Activated B cell treated with CpG ODN at 0.5 μM for 24 hours (primary cell): ENCODE measurements at regions of chr17 and their contacts with region 1.

Region 1: GRCh38 chr17:44350733-44351226 is 5.7 kb downstream of the GRN start:
- DNase-seq: peak; percentile 71
- ATAC-seq: peak; percentile 42
- H3K4me3 Mint-ChIP-seq: no peak overlapping the region
- H3K27ac Mint-ChIP-seq: peak overlapping the region; percentile 65
- H3K4me1 Mint-ChIP-seq: peaks cover 54% of the 10 kb centered on the region
- H3K27me3 Mint-ChIP-seq: no peaks in the 10 kb centered on the region
- CTCF ChIP-seq: no peak

Region 2: DNA sequence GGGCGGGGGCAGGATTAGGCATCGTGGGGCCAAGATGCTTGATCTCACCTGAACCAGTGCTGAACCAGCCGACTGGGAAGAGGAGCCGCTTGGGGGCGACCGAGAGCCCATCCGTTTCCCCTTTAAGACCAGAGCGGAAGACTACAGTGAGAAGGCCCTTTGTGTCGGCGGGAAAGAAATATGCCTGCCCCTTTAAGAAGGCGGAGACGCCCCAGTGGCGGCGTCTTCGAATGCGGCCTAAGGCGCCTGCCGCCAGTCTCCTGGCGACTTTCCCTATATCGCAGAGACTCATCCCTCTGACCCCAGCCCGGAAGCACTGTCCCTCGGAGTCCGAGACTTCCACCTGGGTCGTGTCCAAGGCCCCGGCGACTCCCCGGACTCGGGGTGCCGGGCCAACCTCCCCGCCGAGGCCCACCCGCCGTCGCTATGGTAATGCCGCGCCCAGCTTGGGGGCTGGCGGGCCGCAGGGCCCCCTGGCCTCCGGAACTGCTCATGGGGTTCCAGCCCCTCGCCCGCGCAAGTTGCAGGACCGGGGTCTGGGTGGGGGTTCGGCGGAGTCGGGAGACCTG is 209.0 kb before region 1 on chr17 and contains the start of gene HROB:
- CTCF ChIA-PET with region 1: interaction called, 3 read pairs
- POLR2A ChIA-PET with region 1: interaction called, 3 read pairs
- intact Hi-C with region 1: loop called (anchors 1 kb)
- DNase-seq: peak; percentile 96
- ATAC-seq: peak; percentile 98
- H3K4me3 Mint-ChIP-seq: peak within 1 kb of the TSS; percentile 84
- H3K27ac Mint-ChIP-seq: peak within 1 kb of the TSS; percentile 70
- H3K4me1 Mint-ChIP-seq: peaks cover 15% of the 10 kb centered on the region
- H3K27me3 Mint-ChIP-seq: peaks cover 8% of the 10 kb centered on the region
- CTCF ChIP-seq: no peak
- total RNA-seq, gene HROB: 2.2 and 5.0 TPM in 2 replicates

Region 3: DNA sequence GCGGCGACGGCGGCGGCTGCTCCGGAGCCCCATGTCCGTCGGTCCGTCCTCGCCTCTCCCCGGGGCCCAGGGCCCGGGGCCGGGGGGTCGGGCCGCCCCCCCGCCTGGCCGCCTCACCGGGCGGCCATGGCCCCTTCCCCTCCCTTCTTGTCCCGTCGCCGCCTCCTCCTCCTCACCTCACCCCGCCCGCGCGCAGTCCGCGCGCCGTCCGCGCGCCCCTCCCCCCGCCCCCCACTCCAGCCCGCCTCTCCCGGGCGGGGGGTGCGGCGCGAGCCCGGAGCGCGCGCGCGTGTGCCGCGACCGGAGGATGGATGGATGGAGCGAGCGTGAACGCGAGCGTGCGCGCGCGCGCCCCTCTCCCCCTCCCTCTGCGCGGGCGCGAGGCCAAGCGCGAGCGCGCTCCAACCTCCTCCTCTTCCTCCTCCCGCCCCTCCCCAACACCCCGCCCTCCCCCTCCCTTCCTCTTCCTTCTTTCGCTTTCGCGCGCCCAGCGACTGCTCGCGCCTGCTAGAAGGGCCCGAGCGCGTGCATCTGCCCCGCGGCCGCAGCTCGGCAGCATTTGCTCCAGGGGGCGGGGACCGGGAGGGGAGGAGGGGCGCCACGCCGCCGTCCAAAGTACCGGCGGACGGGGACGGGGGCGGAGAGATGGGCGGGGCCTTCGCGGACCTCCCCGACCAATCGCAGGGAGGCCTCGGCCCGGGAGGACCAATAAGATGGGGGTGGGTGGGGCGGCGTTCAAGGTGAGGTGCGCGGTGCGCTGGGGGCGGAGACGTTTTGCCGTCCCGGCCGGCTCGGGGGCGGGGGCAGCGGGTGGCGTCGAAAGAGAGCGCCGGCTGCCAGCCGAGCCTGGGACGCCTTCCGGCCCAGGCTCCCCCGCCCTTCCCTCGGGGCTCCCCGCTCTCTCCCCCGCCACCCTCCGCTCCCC is 151.0 kb before region 1 on chr17 and contains the start of gene ATXN7L3:
- CTCF ChIA-PET with region 1: interaction called, 9 read pairs
- POLR2A ChIA-PET with region 1: interaction called, 35 read pairs
- intact Hi-C with region 1: loop called (anchors 1 kb)
- DNase-seq: peak; percentile 95
- ATAC-seq: peak; percentile 85
- H3K4me3 Mint-ChIP-seq: peak within 1 kb of the TSS; percentile 91
- H3K27ac Mint-ChIP-seq: peak within 1 kb of the TSS; percentile 92
- H3K4me1 Mint-ChIP-seq: peaks cover 39% of the 10 kb centered on the region
- H3K27me3 Mint-ChIP-seq: no peaks in the 10 kb centered on the region
- CTCF ChIP-seq: no peak
- total RNA-seq, gene ATXN7L3: 92.0 and 103 TPM in 2 replicates

Region 4: GRCh38 chr17:44210342-44211192 is 140.2 kb before region 1 on chr17:
- CTCF ChIA-PET with region 1: interaction called, 108 read pairs
- POLR2A ChIA-PET with region 1: interaction called, 241 read pairs
- intact Hi-C with region 1: loop called (anchors 1 kb)
- DNase-seq: peak; percentile 93
- ATAC-seq: peak; percentile 98
- H3K4me3 Mint-ChIP-seq: peak overlapping the region; percentile 52
- H3K27ac Mint-ChIP-seq: peak overlapping the region; percentile 74
- H3K4me1 Mint-ChIP-seq: peaks cover 55% of the 10 kb centered on the region
- H3K27me3 Mint-ChIP-seq: no peaks in the 10 kb centered on the region
- CTCF ChIP-seq: peak; percentile 73

Region 5: GRCh38 chr17:44304651-44305050 is 46.1 kb before region 1 on chr17:
- CTCF ChIA-PET with region 1: no interaction called
- POLR2A ChIA-PET with region 1: no interaction called
- intact Hi-C with region 1: no loop called
- DNase-seq: no peak
- ATAC-seq: no peak
- H3K4me3 Mint-ChIP-seq: no peak overlapping the region
- H3K27ac Mint-ChIP-seq: no peak overlapping the region
- H3K4me1 Mint-ChIP-seq: peaks cover 17% of the 10 kb centered on the region
- H3K27me3 Mint-ChIP-seq: peaks cover 34% of the 10 kb centered on the region
- CTCF ChIP-seq: no peak

Region 6: DNA sequence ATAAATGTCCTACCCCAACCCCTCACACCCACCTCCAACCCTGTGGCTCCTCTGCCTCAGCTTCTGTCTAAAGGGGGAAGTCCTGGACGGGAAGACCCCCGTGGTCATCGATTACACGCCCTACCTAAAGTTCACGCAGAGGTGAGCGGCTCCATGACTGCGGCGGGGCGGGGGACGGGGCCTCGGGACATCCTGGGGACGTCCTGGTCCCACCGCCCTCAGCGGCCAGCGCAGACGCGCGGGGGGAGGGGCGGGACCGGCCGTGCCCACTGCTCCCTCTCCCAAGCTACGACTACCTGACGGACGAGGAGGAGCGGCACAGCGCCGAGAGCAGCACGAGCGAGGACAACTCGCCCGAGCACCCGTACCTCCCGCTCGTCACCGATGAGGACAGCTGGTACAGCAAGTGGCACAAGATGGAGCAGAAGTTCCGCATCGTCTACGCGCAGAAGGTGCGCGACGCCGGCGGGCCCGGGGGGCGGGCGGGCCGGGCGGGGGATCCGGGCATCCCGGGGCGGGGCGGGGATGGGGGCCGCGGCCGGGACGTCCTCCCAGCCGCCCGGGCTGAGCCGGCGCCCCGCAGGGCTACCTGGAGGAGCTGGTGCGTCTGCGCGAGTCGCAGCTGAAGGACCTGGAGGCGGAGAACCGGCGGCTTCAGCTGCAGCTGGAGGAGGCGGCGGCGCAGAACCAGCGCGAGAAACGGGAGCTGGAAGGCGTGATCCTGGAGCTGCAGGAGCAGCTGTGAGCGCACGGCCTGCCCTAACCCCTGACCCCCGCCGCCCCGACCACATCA is 35.7 kb before region 1 on chr17:
- CTCF ChIA-PET with region 1: interaction called, 3 read pairs
- POLR2A ChIA-PET with region 1: interaction called, 3 read pairs
- intact Hi-C with region 1: loop called (anchors 5 kb)
- DNase-seq: no peak
- ATAC-seq: peak; percentile 63
- H3K4me3 Mint-ChIP-seq: peak overlapping the region; percentile 66
- H3K27ac Mint-ChIP-seq: no peak overlapping the region
- H3K4me1 Mint-ChIP-seq: peaks cover 17% of the 10 kb centered on the region
- H3K27me3 Mint-ChIP-seq: peaks cover 39% of the 10 kb centered on the region
- CTCF ChIP-seq: no peak

Region 7: GRCh38 chr17:44331249-44331760 is 19.5 kb before region 1 on chr17:
- CTCF ChIA-PET with region 1: interaction called, 38 read pairs
- POLR2A ChIA-PET with region 1: interaction called, 32 read pairs
- intact Hi-C with region 1: loop called (anchors 1 kb)
- DNase-seq: no peak
- ATAC-seq: peak; percentile 32
- H3K4me3 Mint-ChIP-seq: no peak overlapping the region
- H3K27ac Mint-ChIP-seq: no peak overlapping the region
- H3K4me1 Mint-ChIP-seq: peaks cover 34% of the 10 kb centered on the region
- H3K27me3 Mint-ChIP-seq: no peaks in the 10 kb centered on the region
- CTCF ChIP-seq: peak; percentile 88

Region 8: GRCh38 chr17:44363613-44364159 is 12.9 kb after region 1 on chr17 and contains the start of gene FAM171A2:
- CTCF ChIA-PET with region 1: interaction called, 10 read pairs
- POLR2A ChIA-PET with region 1: interaction called, 7 read pairs
- intact Hi-C with region 1: no loop called
- DNase-seq: peak; percentile 78
- ATAC-seq: peak; percentile 92
- H3K4me3 Mint-ChIP-seq: peak within 1 kb of the TSS; percentile 79
- H3K27ac Mint-ChIP-seq: no peak within 1 kb of the TSS
- H3K4me1 Mint-ChIP-seq: peaks cover 11% of the 10 kb centered on the region
- H3K27me3 Mint-ChIP-seq: peaks cover 23% of the 10 kb centered on the region
- CTCF ChIP-seq: peak; percentile 55
- total RNA-seq, gene FAM171A2: 0.49 and 0.75 TPM in 2 replicates

Region 9: DNA sequence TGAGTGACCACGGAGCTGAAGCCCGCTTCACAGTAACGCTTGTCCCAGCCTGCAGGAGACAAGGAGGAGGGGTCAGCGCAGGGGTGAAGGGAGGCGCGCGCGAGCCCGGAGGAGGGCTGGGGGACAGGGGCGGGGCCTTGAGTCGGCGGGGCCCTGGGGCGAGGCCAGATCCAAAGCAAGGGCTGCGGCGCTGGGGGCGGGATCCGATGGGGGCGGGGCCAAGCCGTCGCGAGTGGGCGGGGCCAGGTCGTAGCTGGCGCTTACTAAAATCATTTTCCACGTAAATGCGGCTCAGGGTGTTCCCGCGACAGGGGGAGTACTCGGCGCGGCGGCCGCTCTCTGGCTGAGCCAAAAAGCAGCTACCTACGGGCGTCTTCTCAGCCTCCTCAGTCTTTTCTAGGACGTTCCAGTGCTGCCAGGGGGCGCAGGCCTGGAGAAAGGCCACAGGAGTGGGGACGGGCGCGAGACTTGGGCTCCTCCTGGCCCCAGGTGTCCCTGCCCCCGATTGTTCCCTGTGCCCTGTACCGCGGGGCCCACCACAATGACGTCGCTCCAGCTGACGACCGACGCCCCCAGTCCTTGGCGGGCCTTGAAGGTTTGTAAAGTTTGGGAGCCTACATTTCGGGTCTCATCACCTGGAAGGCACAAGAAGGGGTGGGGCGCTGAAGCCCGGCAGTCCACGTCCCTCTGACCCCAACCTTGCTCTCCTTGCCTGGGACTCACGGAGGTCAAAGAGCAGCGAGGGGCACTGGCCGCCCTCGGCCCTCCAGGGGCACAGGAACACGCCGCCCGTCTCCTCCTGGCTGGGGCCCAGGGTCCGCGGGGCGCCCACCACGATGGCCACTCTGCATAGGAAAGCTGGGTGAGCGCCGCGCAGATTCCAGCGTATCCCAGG is 34.8 kb after region 1 on chr17:
- CTCF ChIA-PET with region 1: no interaction called
- POLR2A ChIA-PET with region 1: no interaction called
- intact Hi-C with region 1: no loop called
- DNase-seq: peak; percentile 67
- ATAC-seq: peak; percentile 97
- H3K4me3 Mint-ChIP-seq: peak overlapping the region; percentile 77
- H3K27ac Mint-ChIP-seq: no peak overlapping the region
- H3K4me1 Mint-ChIP-seq: peaks cover 23% of the 10 kb centered on the region
- H3K27me3 Mint-ChIP-seq: peaks cover 31% of the 10 kb centered on the region
- CTCF ChIP-seq: no peak

Region 10: DNA sequence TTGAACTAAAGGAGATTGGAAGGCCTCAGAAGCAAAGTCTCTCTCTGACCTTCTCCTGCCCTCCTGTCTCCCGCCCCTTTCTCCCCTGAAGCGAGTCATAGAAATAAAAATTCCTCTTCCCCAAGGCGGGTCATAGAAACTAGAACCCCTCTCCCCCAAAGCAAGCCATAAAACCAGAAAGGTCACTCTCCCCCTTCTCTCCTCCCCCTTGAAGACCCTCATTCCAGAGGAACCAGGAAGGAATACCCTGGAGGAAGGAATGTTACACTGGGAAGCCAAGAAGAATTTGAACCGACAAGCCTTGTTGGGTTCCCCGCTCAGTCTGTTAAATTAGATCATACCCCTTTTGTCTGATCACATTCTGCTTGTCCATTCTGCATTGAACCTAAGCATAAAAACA is 482.0 kb after region 1 on chr17:
- CTCF ChIA-PET with region 1: no interaction called
- POLR2A ChIA-PET with region 1: no interaction called
- intact Hi-C with region 1: no loop called
- DNase-seq: no peak
- ATAC-seq: no peak
- H3K4me3 Mint-ChIP-seq: no peak overlapping the region
- H3K27ac Mint-ChIP-seq: no peak overlapping the region
- H3K4me1 Mint-ChIP-seq: peaks cover 13% of the 10 kb centered on the region
- H3K27me3 Mint-ChIP-seq: peaks cover 45% of the 10 kb centered on the region
- CTCF ChIP-seq: no peak